Activated CD8-positive, alpha-beta T cell treated with anti-CD3 and anti-CD28 coated beads, Interleukin-2, amount 10 ng/mL, durations not matched to agents 7 days and 5 days (primary cell): ENCODE measurements at regions of chr15 and their contacts with region 1.

Region 1: GRCh38 chr15:31396881-31397560 is 70.4 kb downstream of the KLF13 start:
- DNase-seq: peak; percentile 13
- ATAC-seq: no peak
- H3K4me3 Mint-ChIP-seq: no peak overlapping the region
- H3K27ac Mint-ChIP-seq: no peak overlapping the region
- H3K4me1 Mint-ChIP-seq: peaks cover 60% of the 10 kb centered on the region
- H3K27me3 Mint-ChIP-seq: no peaks in the 10 kb centered on the region

Region 2: DNA sequence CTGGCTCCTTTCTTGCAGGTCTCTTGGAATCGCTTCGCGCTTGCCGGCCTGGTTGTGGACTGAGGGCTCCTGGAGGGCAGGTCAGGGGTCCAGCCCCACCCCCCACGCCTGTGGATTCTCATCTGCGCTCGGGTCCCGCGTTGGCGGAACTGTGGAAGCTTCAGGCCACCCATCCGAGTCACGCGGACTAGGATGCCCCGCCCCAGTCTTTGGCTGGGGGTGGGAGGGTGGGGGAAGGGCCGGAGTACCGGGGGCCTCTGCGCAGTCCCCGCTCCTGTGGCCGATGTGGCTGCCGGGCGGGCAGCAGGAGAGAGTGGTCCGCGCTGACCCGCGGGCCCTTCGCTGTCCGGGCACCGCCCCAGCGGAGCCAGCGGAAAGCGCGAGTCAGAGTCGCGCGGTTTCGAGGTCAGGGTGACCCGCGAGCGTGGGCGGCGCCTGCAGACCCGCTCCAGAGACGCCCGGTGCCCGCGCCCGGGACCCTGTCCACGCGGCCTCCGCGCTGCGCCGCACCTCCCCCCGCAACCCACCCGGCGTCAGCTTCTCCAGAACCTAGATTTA is 43.8 kb after region 1 on chr15:
- CTCF ChIA-PET with region 1: interaction called, 23 read pairs
- POLR2A ChIA-PET with region 1: interaction called, 46 read pairs
- DNase-seq: peak; percentile 56
- ATAC-seq: peak; percentile 60
- H3K4me3 Mint-ChIP-seq: peak overlapping the region; percentile 72
- H3K27ac Mint-ChIP-seq: peak overlapping the region; percentile 81
- H3K4me1 Mint-ChIP-seq: peaks cover 70% of the 10 kb centered on the region
- H3K27me3 Mint-ChIP-seq: no peaks in the 10 kb centered on the region

Region 3: GRCh38 chr15:31511707-31512310 is 114.8 kb after region 1 on chr15:
- CTCF ChIA-PET with region 1: no interaction called
- POLR2A ChIA-PET with region 1: no interaction called
- DNase-seq: peak; percentile 47
- ATAC-seq: no peak
- H3K4me3 Mint-ChIP-seq: no peak overlapping the region
- H3K27ac Mint-ChIP-seq: no peak overlapping the region
- H3K4me1 Mint-ChIP-seq: peaks cover 10% of the 10 kb centered on the region
- H3K27me3 Mint-ChIP-seq: peaks cover 10% of the 10 kb centered on the region